Psoas muscle (tissue), 8 donors: ENCODE measurements at regions of chr10 and their contacts with region 1.

Region 1: GRCh38 chr10:101297901-101298486 is 56.0 kb upstream of the BTRC start:
- DNase-seq: peak; percentile 59 to 86
- ATAC-seq: peak; percentile 67 to 85 (median 80)
- H3K4me3 ChIP-seq: no peak overlapping the region
- H3K27ac ChIP-seq: peak overlapping the region; percentile 68
- H3K4me1 ChIP-seq: peaks cover 25% of the 10 kb centered on the region
- H3K27me3 ChIP-seq: peaks cover 0 to 4% (median 0%) of the 10 kb centered on the region in 3 donors
- CTCF ChIP-seq: peak; percentile 87

Region 2: DNA sequence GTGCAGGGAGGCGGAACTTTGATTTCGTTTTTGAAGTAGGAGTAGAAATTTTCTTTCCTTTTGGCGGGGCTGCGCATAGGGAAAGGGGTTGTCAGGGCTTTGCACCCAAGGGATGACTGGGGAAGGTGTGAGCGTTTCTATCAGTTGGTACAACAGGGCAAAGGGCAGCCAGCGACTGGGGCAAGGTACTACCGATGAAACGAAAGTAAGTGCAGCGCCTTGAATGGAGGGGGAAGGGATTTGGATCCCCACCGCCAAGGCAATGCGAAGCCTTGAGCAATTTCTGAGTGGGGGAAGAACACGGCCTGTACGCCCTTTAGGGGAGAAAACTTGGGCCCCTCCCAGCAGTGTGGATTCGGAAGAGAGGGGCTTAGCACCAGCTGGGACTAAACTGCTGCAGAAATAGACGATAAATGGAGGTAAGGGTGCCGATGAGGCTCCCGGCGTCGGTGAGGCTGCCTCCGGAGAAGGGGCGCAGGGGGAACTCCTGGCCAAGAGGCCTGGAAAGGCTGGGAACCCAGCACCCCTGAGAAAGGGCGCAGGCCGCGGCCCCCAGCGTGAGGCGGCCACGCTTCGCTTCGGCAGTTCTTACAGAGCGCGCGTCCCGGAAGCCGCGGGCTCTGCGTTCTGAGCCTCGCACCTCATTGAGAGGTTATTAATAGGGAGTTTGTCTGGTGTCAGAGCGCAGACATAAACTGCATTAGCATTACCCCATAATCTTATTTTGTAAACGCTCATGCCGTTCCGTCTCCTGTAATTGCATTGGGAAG is 176.9 kb before region 1 on chr10:
- intact Hi-C with region 1: no loop called
- DNase-seq: peak in 1 of 2 donors; percentile 41
- ATAC-seq: peak; percentile 19 to 71 (median 57)
- H3K4me3 ChIP-seq: peak overlapping the region; percentile 75
- H3K27ac ChIP-seq: no peak overlapping the region
- H3K4me1 ChIP-seq: peaks cover 13% of the 10 kb centered on the region
- H3K27me3 ChIP-seq: peaks cover 0 to 90% (median 44%) of the 10 kb centered on the region in 3 donors
- CTCF ChIP-seq: no peak

Region 3: DNA sequence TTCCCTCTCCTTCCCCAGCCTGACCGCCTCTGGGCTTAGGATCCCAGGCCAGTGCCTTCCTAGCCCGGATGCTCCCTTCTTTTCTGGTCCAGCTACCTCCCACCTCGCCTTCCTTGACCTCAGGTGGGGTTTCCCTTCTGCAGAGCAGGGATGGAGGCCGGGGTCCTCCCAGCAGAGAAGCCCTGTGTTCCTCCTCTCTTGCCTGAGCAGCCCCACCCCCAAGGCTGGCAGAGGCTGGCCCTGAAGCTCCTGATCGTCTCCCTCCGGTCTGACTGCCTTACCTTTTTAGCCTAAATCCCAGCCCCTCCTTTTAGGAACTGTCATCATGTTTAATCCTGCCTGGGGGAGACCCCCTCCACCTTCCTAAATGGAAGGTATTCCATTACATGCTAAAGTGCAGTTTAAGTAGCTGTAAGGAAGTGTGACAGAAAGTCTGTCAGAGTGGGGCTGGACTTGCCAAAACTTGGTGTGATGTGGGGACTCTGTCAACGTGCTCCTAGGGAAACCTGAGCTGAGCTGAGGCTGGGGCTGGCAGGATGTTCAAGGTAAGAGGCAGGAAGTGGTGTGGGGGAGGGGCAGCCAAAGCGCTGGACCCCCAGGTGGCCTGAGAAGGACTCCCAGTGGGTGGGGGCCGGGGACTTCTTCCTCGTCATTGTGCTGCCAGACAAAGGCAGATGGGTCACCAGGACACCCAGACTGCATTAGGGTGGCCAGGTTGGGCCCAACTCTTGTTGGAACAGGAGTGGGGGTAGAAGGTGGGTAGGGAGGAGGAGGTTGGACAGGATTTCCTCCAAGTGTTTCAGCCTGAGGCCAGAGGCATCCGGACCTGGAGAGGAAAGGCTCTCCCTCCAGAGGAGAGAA is 108.2 kb before region 1 on chr10:
- intact Hi-C with region 1: no loop called
- DNase-seq: no peak
- ATAC-seq: no peak
- H3K4me3 ChIP-seq: no peak overlapping the region
- H3K27ac ChIP-seq: no peak overlapping the region
- H3K4me1 ChIP-seq: no peaks in the 10 kb centered on the region
- H3K27me3 ChIP-seq: no peaks in the 10 kb centered on the region
- CTCF ChIP-seq: no peak

Region 4: GRCh38 chr10:101415884-101416283 is 117.9 kb after region 1 on chr10:
- intact Hi-C with region 1: no loop called
- DNase-seq: no peak
- ATAC-seq: no peak
- H3K4me3 ChIP-seq: no peak overlapping the region
- H3K27ac ChIP-seq: no peak overlapping the region
- H3K4me1 ChIP-seq: no peaks in the 10 kb centered on the region
- H3K27me3 ChIP-seq: no peaks in the 10 kb centered on the region
- CTCF ChIP-seq: no peak

Region 5: DNA sequence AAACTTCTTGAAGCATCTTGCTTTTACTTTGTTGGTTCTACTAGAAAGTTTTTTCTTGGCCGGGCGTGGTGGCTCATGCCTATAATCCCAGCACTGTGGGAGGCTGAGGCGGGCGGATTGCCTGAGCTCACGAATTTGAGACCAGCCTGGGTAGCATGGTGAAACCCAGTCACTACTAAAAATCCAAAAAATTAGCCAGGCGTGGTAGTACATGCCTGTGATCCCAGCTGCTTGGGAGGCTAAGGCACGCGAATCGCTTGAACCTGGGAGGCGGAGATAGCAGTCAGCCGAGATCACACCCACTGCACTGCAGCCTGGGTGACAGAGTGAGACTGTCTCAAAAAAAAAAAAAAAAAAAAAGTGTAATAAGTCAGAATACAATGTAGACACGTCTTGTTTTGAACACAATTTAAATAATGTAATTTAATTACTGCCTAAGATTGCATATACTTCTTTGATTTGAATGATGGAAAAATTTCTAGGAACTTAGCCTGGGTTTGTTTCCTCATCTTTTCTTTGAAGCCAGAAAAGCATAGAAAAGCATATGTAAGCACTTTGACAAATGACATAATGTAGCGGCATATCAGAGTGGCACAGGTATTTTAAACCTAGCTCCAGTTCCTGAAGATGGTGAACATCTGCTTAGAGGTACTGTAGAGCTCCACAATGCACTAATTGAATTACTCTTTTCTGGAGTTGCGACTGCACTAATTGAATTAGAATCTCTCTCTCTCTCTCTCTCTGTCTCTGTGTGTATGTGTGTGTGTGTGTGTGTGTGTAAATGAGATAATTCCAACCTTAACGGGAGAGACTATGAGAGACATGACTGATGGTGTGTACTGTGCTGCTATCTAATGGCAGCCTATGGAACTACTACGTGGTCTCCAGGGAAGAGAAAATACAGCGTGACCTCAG is 143.8 kb after region 1 on chr10:
- intact Hi-C with region 1: loop called (anchors 2 kb)
- DNase-seq: no peak
- ATAC-seq: peak; percentile 89 to 95 (median 92)
- H3K4me3 ChIP-seq: no peak overlapping the region
- H3K27ac ChIP-seq: no peak overlapping the region
- H3K4me1 ChIP-seq: peaks cover 26% of the 10 kb centered on the region
- H3K27me3 ChIP-seq: no peaks in the 10 kb centered on the region
- CTCF ChIP-seq: peak; percentile 51